Adrenal gland (tissue), 19 donors: ENCODE measurements at regions of chr3 and their contacts with region 1.

Region 1: GRCh38 chr3:17213102-17213501 is 328.3 kb downstream of the PLCL2 start:
- DNase-seq: no peak
- H3K4me3 ChIP-seq: no peak overlapping the region
- H3K27ac ChIP-seq: no peak overlapping the region
- H3K4me1 ChIP-seq: no peaks in the 10 kb centered on the region
- H3K27me3 ChIP-seq: no peaks in the 10 kb centered on the region
- CTCF ChIP-seq: no peak
- POLR2A ChIP-seq: no peak

Region 2: GRCh38 chr3:17136136-17136721 is 76.9 kb before region 1 on chr3:
- intact Hi-C with region 1: loop called in 1 of 2 experiments (anchors 10 kb)
- DNase-seq: peak; percentile 81 to 95 (median 91)
- H3K4me3 ChIP-seq: no peak overlapping the region
- H3K27ac ChIP-seq: peak overlapping the region in 4 of 5 donors; percentile 55 to 85 (median 65)
- H3K4me1 ChIP-seq: peaks cover 18 to 24% of the 10 kb centered on the region in 2 donors
- H3K27me3 ChIP-seq: no peaks in the 10 kb centered on the region
- CTCF ChIP-seq: no peak
- POLR2A ChIP-seq: no peak